Panc1 (cell line): ENCODE measurements at regions of chr5 and their contacts with region 1.

Region 1: DNA sequence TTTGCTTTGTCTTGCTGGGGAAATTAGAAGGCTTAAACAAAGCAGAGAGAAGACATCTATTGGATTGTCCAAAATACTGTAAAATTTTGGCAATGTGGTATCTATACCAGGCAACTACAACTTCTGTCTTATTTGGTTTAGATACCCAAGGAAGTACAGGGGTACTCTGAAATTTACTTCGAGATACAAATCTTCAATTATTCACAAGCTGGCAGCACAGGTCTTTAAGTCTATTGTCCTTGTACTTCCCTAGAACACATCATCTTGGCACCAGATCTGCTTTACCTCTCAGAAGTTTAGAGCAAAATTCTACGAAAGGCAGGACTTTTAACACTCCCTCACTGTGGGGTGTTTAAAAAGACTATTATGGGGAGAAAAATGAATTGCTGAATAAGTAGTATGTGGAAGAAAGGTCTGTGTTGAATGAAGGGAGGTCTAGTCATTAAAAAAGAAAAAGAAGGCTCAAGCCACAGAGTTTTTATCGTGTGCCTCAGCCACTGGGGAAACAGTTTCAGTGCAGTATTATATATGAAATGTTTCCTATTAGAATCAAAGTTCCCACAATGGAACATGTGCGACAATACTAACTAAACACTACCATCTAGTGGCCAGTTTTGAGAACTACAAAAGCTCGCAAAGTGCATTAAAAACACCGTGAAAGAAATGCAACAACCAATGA is 93.7 kb downstream of the PDE4D start:
- DNase-seq: peak; percentile 59
- ATAC-seq: peak; percentile 82
- H3K4me3 ChIP-seq: peak overlapping the region in 1 of 2 experiments; percentile 21; a peak in 1 of 4 replicates
- H3K27ac ChIP-seq: no peak overlapping the region
- H3K4me1 ChIP-seq: no peaks in the 10 kb centered on the region
- H3K27me3 ChIP-seq: no peaks in the 10 kb centered on the region
- CTCF ChIP-seq: peak; percentile 66; the same call in 1 of the 2 replicates

Region 2: DNA sequence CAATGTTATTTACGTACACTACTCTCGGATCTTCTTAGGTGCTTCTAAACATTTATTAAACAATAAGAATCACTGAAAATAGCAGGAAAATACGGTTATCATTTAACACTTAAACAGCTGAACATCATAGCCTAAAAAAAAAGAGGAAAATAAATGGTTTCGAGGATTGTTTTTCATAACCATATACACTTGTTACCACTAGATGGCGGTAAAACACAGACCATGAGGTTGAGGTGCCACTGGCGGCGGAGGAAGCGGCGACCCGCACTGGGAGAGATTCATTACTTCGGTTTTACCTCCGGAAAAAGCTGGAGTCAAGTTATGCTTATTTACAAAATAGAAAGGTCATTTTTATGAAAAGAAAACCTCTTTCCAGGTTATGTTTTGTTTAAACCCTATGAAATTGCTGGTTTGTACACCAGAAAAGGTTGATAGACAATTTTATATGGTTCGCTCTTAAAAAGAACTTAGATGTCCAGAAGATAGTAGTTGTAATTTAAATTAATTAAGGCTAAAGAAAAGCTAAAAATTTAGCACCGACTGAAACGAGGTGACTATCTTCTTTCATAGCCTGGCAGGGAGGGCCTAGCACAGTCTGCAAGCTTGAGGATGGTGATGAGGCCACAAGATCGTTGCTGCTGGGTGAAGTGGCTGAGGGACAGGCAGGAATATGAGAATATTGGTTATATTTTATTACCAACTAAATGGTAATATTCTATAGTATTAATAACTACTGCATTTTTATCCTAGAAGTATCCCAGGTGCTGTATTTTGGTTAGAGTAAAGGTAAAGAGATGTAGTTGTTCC is 611.2 kb before region 1 on chr5:
- CTCF ChIA-PET with region 1: no interaction called
- POLR2A ChIA-PET with region 1: no interaction called
- in situ Hi-C with region 1: no loop called
- intact Hi-C with region 1: loop called (anchors 1 kb)
- DNase-seq: no peak
- ATAC-seq: peak; percentile 87
- H3K4me3 ChIP-seq: no peak overlapping the region
- H3K27ac ChIP-seq: no peak overlapping the region
- H3K4me1 ChIP-seq: no peaks in the 10 kb centered on the region; the same call in 1 of the 2 replicates
- H3K27me3 ChIP-seq: peaks cover 4% of the 10 kb centered on the region; the same call in 1 of the 2 replicates
- CTCF ChIP-seq: peak; percentile 79

Region 3: GRCh38 chr5:59390074-59390659 is 409.6 kb before region 1 on chr5:
- CTCF ChIA-PET with region 1: no interaction called
- POLR2A ChIA-PET with region 1: no interaction called
- in situ Hi-C with region 1: no loop called
- intact Hi-C with region 1: loop called (anchors 2 kb)
- DNase-seq: peak; percentile 4
- ATAC-seq: no peak
- H3K4me3 ChIP-seq: no peak overlapping the region
- H3K27ac ChIP-seq: no peak overlapping the region
- H3K4me1 ChIP-seq: no peaks in the 10 kb centered on the region
- H3K27me3 ChIP-seq: no peaks in the 10 kb centered on the region
- CTCF ChIP-seq: peak; percentile 52; the same call in 1 of the 2 replicates

Region 4: DNA sequence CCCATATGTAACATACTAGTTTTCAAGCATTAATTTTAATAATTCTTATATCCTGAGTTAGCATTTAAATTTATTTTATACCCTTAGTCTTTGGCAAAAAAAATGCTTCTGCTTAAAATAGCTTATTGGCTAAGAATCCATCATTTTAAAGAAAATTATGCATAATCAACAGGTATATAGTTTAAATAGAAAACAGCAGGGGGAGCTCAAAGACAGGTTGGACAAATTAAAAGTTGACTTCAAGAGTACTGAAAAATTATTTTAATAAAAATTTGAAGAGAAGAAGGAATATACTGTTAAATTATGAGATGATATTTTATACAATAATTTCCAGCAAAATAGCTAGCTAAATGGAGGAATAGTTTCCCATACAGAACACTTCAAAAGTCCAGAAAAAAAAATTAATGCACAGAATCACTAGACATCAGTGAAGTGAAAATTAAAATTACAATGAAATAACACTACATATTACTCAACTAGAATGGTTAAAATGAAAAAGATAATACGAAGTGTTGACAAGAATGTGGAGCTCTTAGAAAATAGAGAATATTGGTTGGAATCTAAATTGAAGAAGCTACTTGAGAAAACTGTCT is 293.4 kb before region 1 on chr5:
- CTCF ChIA-PET with region 1: no interaction called
- POLR2A ChIA-PET with region 1: no interaction called
- in situ Hi-C with region 1: no loop called
- intact Hi-C with region 1: loop called (anchors 5 kb)
- DNase-seq: no peak
- ATAC-seq: no peak
- H3K4me3 ChIP-seq: no peak overlapping the region
- H3K27ac ChIP-seq: no peak overlapping the region
- H3K4me1 ChIP-seq: no peaks in the 10 kb centered on the region
- H3K27me3 ChIP-seq: no peaks in the 10 kb centered on the region
- CTCF ChIP-seq: peak; percentile 31; the same call in 1 of the 2 replicates